Naive thymus-derived CD4-positive, alpha-beta T cell (primary cell): ENCODE measurements at regions of chr10 and their contacts with region 1.

Region 1: GRCh38 chr10:79347226-79347893 is at the start of gene PPIF:
- DNase-seq: peak; percentile 79 to 99 (median 90)
- ATAC-seq: peak; percentile 96
- H3K4me3 ChIP-seq: peak within 1 kb of the TSS; percentile 72
- H3K4me3 Mint-ChIP-seq: peak within 1 kb of the TSS; percentile 71 to 92 (median 78)
- H3K27ac ChIP-seq: peak within 1 kb of the TSS; percentile 73
- H3K27ac Mint-ChIP-seq: peak within 1 kb of the TSS; percentile 76 to 96 (median 86)
- H3K4me1 ChIP-seq: peaks cover 19 to 25% of the 10 kb centered on the region in 2 donors
- H3K4me1 Mint-ChIP-seq: peaks cover 9 to 50% (median 19%) of the 10 kb centered on the region in 7 donors
- H3K27me3 ChIP-seq: no peaks in the 10 kb centered on the region
- H3K27me3 Mint-ChIP-seq: no peaks in the 10 kb centered on the region
- total RNA-seq, gene PPIF: 20.6 to 192 (median 73.3) TPM

Region 2: GRCh38 chr10:78972947-78973900 is 374.1 kb before region 1 on chr10:
- CTCF ChIA-PET with region 1: no interaction called
- POLR2A ChIA-PET with region 1: no interaction called
- intact Hi-C with region 1: loop called (anchors 5 kb)
- DNase-seq: peak; percentile 24 to 83 (median 43)
- ATAC-seq: peak; percentile 72
- H3K4me3 ChIP-seq: peak overlapping the region; percentile 13
- H3K4me3 Mint-ChIP-seq: peak overlapping the region; percentile 72 to 89 (median 84)
- H3K27ac ChIP-seq: no peak overlapping the region
- H3K27ac Mint-ChIP-seq: peak overlapping the region in 7 of 9 donors; percentile 2 to 85 (median 66)
- H3K4me1 ChIP-seq: peaks cover 8 to 11% of the 10 kb centered on the region in 2 donors
- H3K4me1 Mint-ChIP-seq: peaks cover 15 to 28% (median 17%) of the 10 kb centered on the region in 7 donors
- H3K27me3 ChIP-seq: no peaks in the 10 kb centered on the region
- H3K27me3 Mint-ChIP-seq: peaks cover 0 to 8% (median 0%) of the 10 kb centered on the region in 5 donors

Region 3: GRCh38 chr10:79286318-79286951 is 60.9 kb before region 1 on chr10:
- CTCF ChIA-PET with region 1: no interaction called
- POLR2A ChIA-PET with region 1: interaction called, 3 read pairs
- intact Hi-C with region 1: loop called in 1 of 2 experiments (anchors 1 kb)
- DNase-seq: peak; percentile 51 to 80 (median 75)
- ATAC-seq: peak; percentile 92
- H3K4me3 ChIP-seq: peak overlapping the region; percentile 34
- H3K4me3 Mint-ChIP-seq: peak overlapping the region; percentile 70 to 80 (median 74)
- H3K27ac ChIP-seq: no peak overlapping the region
- H3K27ac Mint-ChIP-seq: peak overlapping the region; percentile 49 to 88 (median 66)
- H3K4me1 ChIP-seq: peaks cover 21 to 31% of the 10 kb centered on the region in 2 donors
- H3K4me1 Mint-ChIP-seq: peaks cover 24 to 52% (median 38%) of the 10 kb centered on the region in 7 donors
- H3K27me3 ChIP-seq: no peaks in the 10 kb centered on the region
- H3K27me3 Mint-ChIP-seq: no peaks in the 10 kb centered on the region

Region 4: GRCh38 chr10:79316671-79317431 is 30.5 kb before region 1 on chr10:
- CTCF ChIA-PET with region 1: interaction called, 4 read pairs
- POLR2A ChIA-PET with region 1: interaction called, 22 read pairs
- intact Hi-C with region 1: loop called (anchors 1 kb)
- DNase-seq: peak in 1 of 9 donors; percentile 12
- ATAC-seq: peak; percentile 13
- H3K4me3 ChIP-seq: peak overlapping the region; percentile 9
- H3K4me3 Mint-ChIP-seq: peak overlapping the region in 9 of 10 donors; percentile 32 to 86 (median 65)
- H3K27ac ChIP-seq: no peak overlapping the region
- H3K27ac Mint-ChIP-seq: peak overlapping the region in 6 of 9 donors; percentile 31 to 95 (median 88)
- H3K4me1 ChIP-seq: peaks cover 39 to 54% of the 10 kb centered on the region in 2 donors
- H3K4me1 Mint-ChIP-seq: peaks cover 53 to 62% (median 60%) of the 10 kb centered on the region in 7 donors
- H3K27me3 ChIP-seq: no peaks in the 10 kb centered on the region
- H3K27me3 Mint-ChIP-seq: peaks cover 0 to 4% (median 0%) of the 10 kb centered on the region in 5 donors

Region 5: GRCh38 chr10:79331709-79332108 is 15.7 kb before region 1 on chr10:
- CTCF ChIA-PET with region 1: interaction called, 5 read pairs
- POLR2A ChIA-PET with region 1: interaction called, 10 read pairs
- intact Hi-C with region 1: loop called (anchors 1 kb)
- DNase-seq: peak in 6 of 9 donors; percentile 25 to 82 (median 42)
- ATAC-seq: peak; percentile 95
- H3K4me3 ChIP-seq: no peak overlapping the region
- H3K4me3 Mint-ChIP-seq: peak overlapping the region in 1 of 10 donors; percentile 52
- H3K27ac ChIP-seq: no peak overlapping the region
- H3K27ac Mint-ChIP-seq: peak overlapping the region in 8 of 9 donors; percentile 6 to 87 (median 52)
- H3K4me1 ChIP-seq: peaks cover 4 to 14% of the 10 kb centered on the region in 2 donors
- H3K4me1 Mint-ChIP-seq: peaks cover 0 to 44% (median 21%) of the 10 kb centered on the region in 7 donors
- H3K27me3 ChIP-seq: no peaks in the 10 kb centered on the region
- H3K27me3 Mint-ChIP-seq: no peaks in the 10 kb centered on the region

Region 6: GRCh38 chr10:80078448-80079311 is 731.3 kb after region 1 on chr10 and contains the start of gene TMEM254:
- CTCF ChIA-PET with region 1: no interaction called
- POLR2A ChIA-PET with region 1: no interaction called
- intact Hi-C with region 1: loop called in 1 of 2 experiments (anchors 1 kb)
- DNase-seq: peak; percentile 79 to 87 (median 85)
- ATAC-seq: peak; percentile 87
- H3K4me3 ChIP-seq: peak within 1 kb of the TSS; percentile 88
- H3K4me3 Mint-ChIP-seq: peak within 1 kb of the TSS; percentile 90 to 100 (median 96)
- H3K27ac ChIP-seq: peak within 1 kb of the TSS; percentile 87
- H3K27ac Mint-ChIP-seq: peak within 1 kb of the TSS; percentile 88 to 99 (median 95)
- H3K4me1 ChIP-seq: peaks cover 6 to 12% of the 10 kb centered on the region in 2 donors
- H3K4me1 Mint-ChIP-seq: peaks cover 14 to 25% (median 20%) of the 10 kb centered on the region in 7 donors
- H3K27me3 ChIP-seq: no peaks in the 10 kb centered on the region
- H3K27me3 Mint-ChIP-seq: no peaks in the 10 kb centered on the region
- total RNA-seq, gene TMEM254: 7.3 to 19.6 (median 17.1) TPM